Right ventricle myocardium superior (tissue), 1 donor: ENCODE measurements at regions of chr17 and their contacts with region 1.

Region 1: GRCh38 chr17:49290690-49291359 is 60.2 kb upstream of the PHOSPHO1 start:
- DNase-seq: no peak
- ATAC-seq: peak; percentile 39

Region 2: DNA sequence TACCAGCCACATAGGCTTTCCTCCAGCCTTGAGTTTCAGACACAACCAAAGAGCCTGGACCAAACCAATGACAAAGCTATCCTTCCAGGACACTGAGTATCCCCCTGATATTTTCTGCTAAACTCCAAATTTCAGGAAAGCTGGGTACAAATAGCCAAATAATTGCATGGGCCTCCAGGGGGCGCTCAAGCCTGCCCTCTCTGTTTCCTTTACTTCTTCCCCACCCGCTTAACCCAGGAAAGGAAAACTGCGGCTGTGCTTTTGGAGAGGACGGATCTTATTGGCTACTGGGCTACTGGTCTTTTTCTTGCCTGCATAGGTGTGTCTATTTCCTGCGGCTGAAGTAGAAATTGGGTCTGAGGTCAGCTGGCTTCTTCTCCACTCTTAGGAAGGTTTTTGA is 110.5 kb before region 1 on chr17:
- intact Hi-C with region 1: loop called (anchors 10 kb)
- DNase-seq: peak; percentile 82
- ATAC-seq: peak; percentile 58

Region 3: GRCh38 chr17:49227436-49228261 is 63.2 kb before region 1 on chr17:
- intact Hi-C with region 1: loop called (anchors 5 kb)
- DNase-seq: peak; percentile 81
- ATAC-seq: peak; percentile 52

Region 4: DNA sequence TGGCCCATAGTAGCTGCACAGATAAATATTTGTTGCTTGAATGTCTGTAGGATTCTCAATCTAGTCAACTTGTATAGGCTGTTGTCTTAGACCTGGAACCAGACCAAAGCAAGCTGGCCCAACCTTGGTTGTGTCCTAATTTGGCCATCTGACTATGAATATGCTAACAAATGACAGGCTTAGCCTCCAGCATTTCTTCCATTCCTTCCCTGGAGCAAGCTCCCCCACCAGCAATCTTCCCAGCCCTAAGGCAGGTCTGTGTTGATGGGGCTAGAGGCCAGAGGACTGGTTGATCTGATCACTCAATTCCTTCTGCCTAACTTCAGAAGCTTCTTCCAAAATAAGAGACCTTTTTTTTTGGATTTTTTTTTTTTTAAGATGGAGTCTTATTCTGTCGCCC is 50.9 kb before region 1 on chr17:
- intact Hi-C with region 1: no loop called
- DNase-seq: no peak
- ATAC-seq: no peak